ENCODE measurements at regions of chr15 and their contacts with region 1.

Region 1: GRCh38 chr15:90165659-90166421 is 35.3 kb upstream of the SEMA4B start:
- DNase-seq: peak; percentile 95 to 100
- ATAC-seq: peak; percentile 98 to 99
- H3K4me3 ChIP-seq: no peak overlapping the region
- H3K27ac ChIP-seq: peak overlapping the region; percentile 85 to 94
- H3K4me1 ChIP-seq: peaks cover 50% of the 10 kb centered on the region
- CTCF ChIP-seq: no peak
- EP300 ChIP-seq: peak; percentile 90 to 95
- POLR2A ChIP-seq: no peak
- RAD21 ChIP-seq: peak; percentile 16 to 55; a peak in 4 of 5 replicates

Region 2: GRCh38 chr15:90184786-90185569 is 19.1 kb after region 1 on chr15:
- CTCF ChIA-PET with region 1: interaction called, 10 read pairs
- POLR2A ChIA-PET with region 1: interaction called, 13 read pairs
- DNase-seq: peak; percentile 91 to 95
- ATAC-seq: peak; percentile 82 to 87
- H3K4me3 ChIP-seq: peak overlapping the region; percentile 62
- H3K27ac ChIP-seq: peak overlapping the region; percentile 82 to 93
- H3K4me1 ChIP-seq: peaks cover 54% of the 10 kb centered on the region
- CTCF ChIP-seq: no peak
- EP300 ChIP-seq: peak in 1 of 2 experiments; percentile 64; a peak in 1 of 5 replicates
- POLR2A ChIP-seq: peak; percentile 8; the same call in 1 of the 2 replicates
- RAD21 ChIP-seq: peak in 1 of 2 experiments; percentile 50; a peak in 2 of 5 replicates

Measured in A549 (cell line).